Aorta (tissue), 5 donors: ENCODE measurements at regions of chr1 and their contacts with region 1.

Region 1: GRCh38 chr1:54121482-54122134 is 31.2 kb downstream of the CDCP2 start:
- DNase-seq: peak; percentile 85 to 93
- ATAC-seq: peak; percentile 86
- H3K4me3 ChIP-seq: no peak overlapping the region
- H3K27ac ChIP-seq: no peak overlapping the region
- H3K4me1 ChIP-seq: no peaks in the 10 kb centered on the region
- H3K27me3 ChIP-seq: no peaks in the 10 kb centered on the region

Region 2: GRCh38 chr1:54014009-54014629 is 107.5 kb before region 1 on chr1:
- intact Hi-C with region 1: no loop called
- DNase-seq: peak in 1 of 2 donors; percentile 46
- ATAC-seq: no peak
- H3K4me3 ChIP-seq: no peak overlapping the region
- H3K27ac ChIP-seq: no peak overlapping the region
- H3K4me1 ChIP-seq: no peaks in the 10 kb centered on the region
- H3K27me3 ChIP-seq: no peaks in the 10 kb centered on the region

Region 3: GRCh38 chr1:54406339-54407153 is 284.9 kb after region 1 on chr1 and contains the start of gene SSBP3:
- intact Hi-C with region 1: loop called (anchors 5 kb)
- DNase-seq: peak; percentile 95 to 97
- ATAC-seq: peak; percentile 93
- H3K4me3 ChIP-seq: peak within 1 kb of the TSS; percentile 97 to 98
- H3K27ac ChIP-seq: peak within 1 kb of the TSS in 1 of 2 donors; percentile 83
- H3K4me1 ChIP-seq: peaks cover 3 to 5% of the 10 kb centered on the region in 2 donors
- H3K27me3 ChIP-seq: no peaks in the 10 kb centered on the region
- total RNA-seq, gene SSBP3: 73.8 to 83.4 TPM

Region 4: GRCh38 chr1:54653036-54653435 is 531.4 kb after region 1 on chr1:
- intact Hi-C with region 1: no loop called
- DNase-seq: peak in 1 of 2 donors; percentile 31
- ATAC-seq: no peak
- H3K4me3 ChIP-seq: no peak overlapping the region
- H3K27ac ChIP-seq: no peak overlapping the region
- H3K4me1 ChIP-seq: no peaks in the 10 kb centered on the region
- H3K27me3 ChIP-seq: no peaks in the 10 kb centered on the region